Psoas muscle (tissue), 8 donors: ENCODE measurements at regions of chr3 and their contacts with region 1.

Region 1: DNA sequence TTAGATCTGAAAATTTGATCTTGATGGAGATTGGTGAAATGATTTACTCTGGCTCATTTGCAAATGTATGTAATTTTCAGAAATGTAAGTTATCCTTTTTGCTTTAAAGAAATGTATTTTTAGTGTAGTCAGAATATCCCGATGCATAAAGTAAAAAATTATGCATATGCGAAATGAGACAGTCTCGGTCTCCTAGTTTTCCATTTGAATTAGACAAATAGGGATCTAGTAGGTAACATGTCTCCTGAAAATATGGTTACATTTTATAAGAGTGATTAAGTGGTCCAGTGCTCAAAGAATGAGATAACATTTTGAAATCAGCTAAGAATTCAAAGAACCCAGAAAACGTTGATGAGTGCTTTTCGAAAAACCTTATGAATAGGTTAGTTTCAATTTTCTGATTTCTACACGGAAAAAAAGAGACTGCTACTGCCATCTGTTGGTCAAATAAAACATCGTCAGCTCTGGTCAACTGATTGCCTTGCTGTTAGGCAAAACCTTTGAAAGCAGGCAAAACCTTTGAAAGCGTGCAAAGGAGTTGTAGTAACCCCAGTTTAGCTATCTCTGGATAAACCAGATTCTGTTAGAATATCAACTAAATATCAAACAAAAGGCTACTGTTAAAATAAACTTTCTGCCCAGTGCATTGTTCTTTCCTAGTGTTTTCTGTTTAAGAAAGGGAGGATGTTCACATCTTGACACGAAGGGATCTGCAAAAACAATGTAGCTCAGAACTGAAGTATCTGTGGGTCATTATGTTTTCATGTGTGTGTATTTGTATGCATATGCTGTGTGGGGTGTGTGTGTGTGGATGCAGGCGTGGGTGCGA is 59.3 kb upstream of the CHMP2B start:
- DNase-seq: no peak
- ATAC-seq: no peak
- H3K4me3 ChIP-seq: peak overlapping the region; percentile 53
- H3K27ac ChIP-seq: no peak overlapping the region
- H3K4me1 ChIP-seq: no peaks in the 10 kb centered on the region
- H3K27me3 ChIP-seq: no peaks in the 10 kb centered on the region
- CTCF ChIP-seq: peak; percentile 67

Region 2: DNA sequence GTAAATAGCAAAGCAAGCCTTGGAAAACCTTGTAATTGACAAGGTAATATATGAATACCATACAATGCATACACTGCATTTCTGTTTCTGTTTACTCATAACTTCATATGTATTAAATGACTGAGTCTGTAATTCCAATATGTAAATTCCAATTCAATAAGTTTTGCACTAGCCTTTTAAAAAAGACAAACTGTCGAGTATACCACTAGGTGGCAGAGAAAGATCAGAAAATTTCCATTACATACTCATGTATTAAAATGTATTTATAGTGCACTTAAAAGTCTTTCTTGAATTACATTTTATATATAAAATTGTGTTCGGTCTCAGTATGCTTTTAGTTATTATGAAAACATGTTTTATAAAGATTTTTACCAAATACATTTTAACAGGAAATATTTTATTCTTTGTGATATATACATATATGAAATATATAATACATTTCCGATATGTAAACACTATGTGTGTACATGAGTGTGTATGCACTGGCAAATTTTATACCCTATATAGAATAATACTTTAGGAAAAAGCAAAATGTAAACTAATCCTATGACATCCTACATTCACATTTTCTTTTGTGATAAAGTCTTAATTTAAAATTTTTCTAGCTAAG is 393.7 kb before region 1 on chr3:
- intact Hi-C with region 1: loop called (anchors 5 kb)
- DNase-seq: no peak
- ATAC-seq: no peak
- H3K4me3 ChIP-seq: no peak overlapping the region
- H3K27ac ChIP-seq: no peak overlapping the region
- H3K4me1 ChIP-seq: no peaks in the 10 kb centered on the region
- H3K27me3 ChIP-seq: no peaks in the 10 kb centered on the region
- CTCF ChIP-seq: peak; percentile 56

Region 3: GRCh38 chr3:86969500-86970189 is 198.2 kb before region 1 on chr3:
- intact Hi-C with region 1: loop called in 1 of 2 experiments (anchors 10 kb)
- DNase-seq: no peak
- ATAC-seq: no peak
- H3K4me3 ChIP-seq: no peak overlapping the region
- H3K27ac ChIP-seq: no peak overlapping the region
- H3K4me1 ChIP-seq: no peaks in the 10 kb centered on the region
- H3K27me3 ChIP-seq: no peaks in the 10 kb centered on the region
- CTCF ChIP-seq: peak; percentile 47

Region 4: GRCh38 chr3:86990734-86991481 is 176.9 kb before region 1 on chr3 and contains the start of gene VGLL3:
- intact Hi-C with region 1: loop called in 1 of 2 experiments (anchors 10 kb)
- DNase-seq: peak; percentile 76 to 77
- ATAC-seq: peak; percentile 70 to 83 (median 81)
- H3K4me3 ChIP-seq: peak within 1 kb of the TSS; percentile 71
- H3K27ac ChIP-seq: peak within 1 kb of the TSS; percentile 69
- H3K4me1 ChIP-seq: no peaks in the 10 kb centered on the region
- H3K27me3 ChIP-seq: peaks cover 0 to 28% (median 0%) of the 10 kb centered on the region in 3 donors
- CTCF ChIP-seq: no peak
- total RNA-seq, gene VGLL3: 3.2 to 15.1 (median 11.8) TPM